WTC11 (cell line): ENCODE measurements at regions of chr17 and their contacts with region 1.

Region 1: GRCh38 chr17:44522883-44523671 is 19.9 kb upstream of the GPATCH8 start:
- DNase-seq: peak; percentile 91
- ATAC-seq: peak; percentile 99
- H3K4me3 Mint-ChIP-seq: no peak overlapping the region
- H3K27ac Mint-ChIP-seq: no peak overlapping the region
- H3K4me1 Mint-ChIP-seq: no peaks in the 10 kb centered on the region
- H3K27me3 Mint-ChIP-seq: peaks cover 14% of the 10 kb centered on the region
- CTCF ChIP-seq: 0 out of 2 replicates have a peak, but pooled peaks have one; percentile 51

Region 2: DNA sequence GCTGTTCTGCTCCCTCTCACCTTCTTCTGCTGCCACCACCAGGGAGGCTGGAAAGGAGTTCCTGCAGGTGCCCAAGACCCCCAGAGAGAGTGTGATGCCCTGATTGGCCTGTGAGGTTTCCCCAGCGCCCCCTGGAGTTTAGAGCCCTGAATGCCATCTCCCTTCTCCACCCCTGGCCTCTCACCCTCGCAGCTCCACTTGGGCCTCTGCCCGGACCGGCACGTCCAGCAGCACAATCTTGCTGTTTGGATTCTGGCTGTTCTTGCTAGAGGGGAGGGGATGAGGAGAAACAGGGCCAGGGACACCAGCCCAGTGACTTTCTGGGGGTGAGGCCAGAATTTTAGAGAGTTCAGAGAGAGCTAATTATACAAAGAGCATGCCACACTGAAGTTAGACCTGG is 147.0 kb before region 1 on chr17:
- CTCF ChIA-PET with region 1: interaction called, 19 read pairs
- POLR2A ChIA-PET with region 1: no interaction called
- DNase-seq: peak; percentile 74
- ATAC-seq: peak; percentile 46
- H3K4me3 Mint-ChIP-seq: 0 out of 2 replicates have a peak overlapping the region, but pooled peaks have one; percentile 18
- H3K27ac Mint-ChIP-seq: no peak overlapping the region
- H3K4me1 Mint-ChIP-seq: peaks cover 27% of the 10 kb centered on the region
- H3K27me3 Mint-ChIP-seq: peaks cover 5% of the 10 kb centered on the region; the same call in 1 of the 2 replicates
- CTCF ChIP-seq: peak; percentile 55

Region 3: GRCh38 chr17:44400226-44400847 is 122.7 kb before region 1 on chr17:
- CTCF ChIA-PET with region 1: interaction called, 31 read pairs
- POLR2A ChIA-PET with region 1: no interaction called
- DNase-seq: no peak
- ATAC-seq: peak; percentile 48; the same call in 1 of the 2 replicates
- H3K4me3 Mint-ChIP-seq: no peak overlapping the region
- H3K27ac Mint-ChIP-seq: no peak overlapping the region
- H3K4me1 Mint-ChIP-seq: no peaks in the 10 kb centered on the region
- H3K27me3 Mint-ChIP-seq: no peaks in the 10 kb centered on the region; the same call in 1 of the 2 replicates
- CTCF ChIP-seq: peak; percentile 32; the same call in 1 of the 2 replicates

Region 4: DNA sequence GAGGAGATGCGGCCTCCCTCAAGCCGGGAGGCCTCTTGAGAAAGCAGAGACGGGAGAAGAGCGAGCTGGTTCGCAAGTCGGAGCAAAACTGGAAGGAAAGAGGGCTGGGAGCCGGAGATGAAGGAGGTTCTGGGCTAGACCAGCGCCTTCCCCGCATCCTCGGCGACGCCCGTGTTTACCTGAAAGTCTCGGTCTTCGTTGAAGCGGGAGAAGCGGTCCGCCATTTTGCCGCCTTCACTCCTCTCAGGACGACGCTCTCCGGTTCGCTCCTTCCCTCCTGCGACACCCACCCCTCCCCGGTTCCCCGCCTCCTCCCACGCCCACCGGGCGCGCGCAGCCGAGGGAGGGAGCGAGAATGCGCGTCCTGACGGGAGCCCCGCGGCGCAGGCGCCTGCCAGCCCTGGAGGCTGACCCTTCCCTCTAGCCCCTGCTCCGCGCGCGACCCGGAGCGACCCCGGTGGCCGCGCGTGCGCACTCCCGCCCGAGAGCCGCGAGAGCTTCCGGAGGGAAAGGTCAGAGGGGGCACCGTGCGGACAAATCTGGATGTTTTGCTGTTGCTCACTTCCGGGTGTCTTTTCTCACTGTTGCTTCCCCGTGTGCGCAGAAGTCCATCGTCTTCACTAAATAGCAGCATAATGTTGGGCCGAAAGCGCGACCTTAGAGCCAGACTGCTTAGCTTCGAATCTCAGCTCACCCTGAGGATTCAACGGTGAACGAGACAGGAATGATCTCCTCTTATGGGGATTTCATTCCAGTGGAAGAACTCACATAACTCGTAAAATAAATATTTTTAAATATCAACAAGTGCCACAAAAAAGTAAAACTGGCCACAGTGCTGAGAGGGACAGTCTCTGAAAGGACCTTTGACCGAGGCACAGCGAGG is 19.7 kb before region 1 on chr17 and contains the start of gene GPATCH8:
- CTCF ChIA-PET with region 1: interaction called, 20 read pairs
- POLR2A ChIA-PET with region 1: interaction called, 4 read pairs
- DNase-seq: peak; percentile 96
- ATAC-seq: peak; percentile 97
- H3K4me3 Mint-ChIP-seq: peak within 1 kb of the TSS; percentile 99
- H3K27ac Mint-ChIP-seq: peak within 1 kb of the TSS; percentile 100
- H3K4me1 Mint-ChIP-seq: peaks cover 21% of the 10 kb centered on the region
- H3K27me3 Mint-ChIP-seq: peaks cover 16% of the 10 kb centered on the region
- CTCF ChIP-seq: no peak
- total RNA-seq, gene GPATCH8: 51.9 to 52.4 TPM (median 51.9 TPM) in 3 replicates

Region 5: DNA sequence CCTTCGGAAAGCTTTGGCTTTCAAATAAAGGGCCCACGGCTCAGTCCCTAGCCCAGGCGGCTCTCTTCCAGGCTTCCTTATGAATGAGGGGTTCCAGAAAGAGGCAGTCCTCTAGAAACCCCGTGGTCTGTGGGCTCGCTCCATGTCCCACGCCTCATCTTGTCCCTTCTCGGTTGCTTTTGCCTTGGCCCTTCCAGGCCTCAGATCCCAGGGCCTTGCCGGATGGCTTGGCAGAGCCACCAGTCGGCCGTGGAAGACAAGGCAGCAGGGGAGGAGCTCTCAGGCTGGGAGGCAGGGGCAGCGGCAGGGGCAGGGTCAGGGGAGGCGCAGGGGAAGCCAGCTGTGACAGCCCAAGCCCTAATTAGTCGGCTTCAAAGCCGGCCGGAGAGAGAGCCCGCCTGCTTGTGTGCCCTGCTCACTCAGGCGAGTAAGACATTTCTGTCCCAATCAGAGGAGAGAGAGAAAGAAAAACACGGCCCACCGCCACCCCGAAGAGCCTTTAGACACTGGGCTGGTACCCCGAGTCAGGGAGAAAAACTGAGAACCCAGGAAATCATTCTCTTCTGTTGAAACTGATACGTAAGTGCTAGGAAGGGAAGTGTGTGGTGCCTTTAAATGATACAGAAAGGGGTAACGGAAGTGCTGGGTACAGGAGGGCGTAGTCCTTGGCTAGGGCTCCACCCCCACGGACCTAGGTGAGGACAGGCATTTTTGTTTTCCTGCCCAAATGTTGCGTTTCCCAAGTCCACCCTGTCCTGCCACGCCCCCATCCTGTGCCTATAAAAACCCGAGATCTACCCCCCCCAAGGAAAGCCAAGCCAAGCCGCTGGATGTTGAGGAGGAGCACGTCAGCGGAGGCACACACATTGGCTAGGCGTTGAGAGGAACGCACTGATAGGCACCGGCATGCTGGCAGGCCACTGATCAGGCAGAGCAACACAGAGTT is 105.4 kb after region 1 on chr17:
- CTCF ChIA-PET with region 1: interaction called, 10 read pairs
- POLR2A ChIA-PET with region 1: no interaction called
- DNase-seq: peak; percentile 80
- ATAC-seq: peak; percentile 96
- H3K4me3 Mint-ChIP-seq: peak overlapping the region; percentile 67
- H3K27ac Mint-ChIP-seq: peak overlapping the region; percentile 96
- H3K4me1 Mint-ChIP-seq: peaks cover 24% of the 10 kb centered on the region
- H3K27me3 Mint-ChIP-seq: peaks cover 4% of the 10 kb centered on the region; the same call in 1 of the 2 replicates
- CTCF ChIP-seq: no peak